Activated CD4-positive, alpha-beta T cell treated with anti-CD3 and anti-CD28 coated beads, Interleukin-2, amount 10 ng/mL, durations not matched to agents 24 days and 14 days (primary cell): ENCODE measurements at regions of chr19 and their contacts with region 1.

Region 1: DNA sequence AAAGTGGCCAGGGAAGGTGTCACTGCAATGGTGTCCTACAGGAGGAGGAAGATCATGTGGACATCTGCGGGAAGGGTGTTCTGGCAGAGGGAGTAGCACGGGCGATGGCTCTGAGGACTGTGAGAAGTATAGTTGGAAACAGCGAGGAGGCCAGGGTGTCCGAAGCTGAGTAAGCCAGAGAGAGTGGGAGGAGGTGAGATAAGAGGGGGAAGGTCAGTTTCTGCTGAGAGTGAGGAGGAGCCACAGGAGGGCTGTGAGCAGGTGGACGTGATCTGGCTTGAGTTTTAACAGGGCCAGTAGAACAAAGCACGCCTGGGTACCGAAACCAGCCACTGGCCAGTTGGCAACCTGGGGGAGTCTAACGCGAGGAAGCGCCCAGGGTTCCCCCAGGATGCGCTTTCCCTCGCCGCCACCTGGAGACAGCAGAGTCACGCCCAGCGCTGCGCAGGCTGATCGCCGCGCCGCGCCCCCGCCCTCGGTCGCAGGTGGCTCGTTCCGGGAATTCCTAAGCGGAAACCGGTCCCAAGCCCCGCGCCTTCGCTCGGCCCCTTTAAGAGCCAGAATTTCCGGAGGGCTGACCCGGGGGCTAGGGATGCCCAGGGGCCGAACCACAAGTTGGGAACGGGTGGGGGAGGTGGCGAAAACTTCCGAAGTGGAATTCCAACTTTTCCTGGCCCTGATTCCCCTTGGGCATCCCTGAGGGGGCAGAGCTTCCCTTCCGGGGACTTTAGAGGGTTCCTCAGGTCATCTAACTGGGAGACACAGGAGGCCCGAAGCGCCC is 1.1 kb upstream of the LSR start:
- DNase-seq: peak; percentile 82
- H3K4me3 Mint-ChIP-seq: peak overlapping the region; percentile 79
- H3K27ac Mint-ChIP-seq: no peak overlapping the region
- H3K4me1 Mint-ChIP-seq: peaks cover 19% of the 10 kb centered on the region
- H3K27me3 Mint-ChIP-seq: peaks cover 56% of the 10 kb centered on the region

Region 2: DNA sequence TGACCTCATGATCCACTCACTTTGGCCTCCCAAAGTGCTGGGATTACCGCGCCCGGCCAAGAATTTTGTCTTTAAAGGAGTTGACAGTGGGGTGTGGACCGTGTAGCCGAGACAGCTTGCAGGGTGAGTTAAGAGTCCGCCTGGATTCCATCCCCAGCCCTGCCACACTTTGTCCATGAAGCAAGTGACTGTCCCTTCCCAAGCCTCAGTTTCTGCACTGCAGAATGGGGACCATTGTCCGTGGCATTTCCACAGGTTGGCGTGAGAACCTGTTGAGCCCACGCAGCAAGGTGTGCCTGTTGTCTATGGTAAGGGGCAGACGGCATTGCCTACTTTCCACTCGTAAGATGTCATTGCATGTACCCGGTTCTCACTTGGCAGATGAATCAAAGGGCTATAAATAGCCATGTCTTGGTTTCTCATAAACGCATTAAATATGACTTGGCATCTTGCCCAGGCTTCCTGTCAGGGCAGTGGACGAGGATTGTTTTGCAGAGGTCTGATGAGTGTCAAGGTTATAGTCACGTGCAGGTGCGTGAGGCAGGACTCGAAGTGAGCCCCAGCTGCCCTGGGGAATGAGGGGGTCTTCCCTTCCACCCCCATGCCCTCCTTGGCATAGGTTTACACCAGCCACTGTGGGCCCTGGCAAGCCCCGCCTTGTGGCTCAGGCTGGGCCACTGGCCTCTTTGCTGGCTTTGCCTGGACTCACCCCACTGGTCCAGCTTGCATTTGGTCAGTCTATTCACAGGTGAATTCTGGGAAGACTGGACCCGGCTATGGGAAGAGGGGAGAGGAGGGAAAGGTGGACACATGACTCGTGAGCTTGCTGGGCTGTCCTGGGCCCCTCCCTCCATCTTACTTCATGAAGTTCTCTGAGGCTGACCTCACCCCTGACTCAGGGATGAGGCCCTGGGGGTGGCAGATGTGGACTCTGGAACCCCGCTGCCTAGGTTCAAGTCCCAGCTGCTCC is 33.8 kb before region 1 on chr19:
- intact Hi-C with region 1: loop called (anchors 5 kb)
- DNase-seq: peak; percentile 88
- H3K4me3 Mint-ChIP-seq: peak overlapping the region; percentile 19
- H3K27ac Mint-ChIP-seq: peak overlapping the region; percentile 84
- H3K4me1 Mint-ChIP-seq: peaks cover 56% of the 10 kb centered on the region
- H3K27me3 Mint-ChIP-seq: no peaks in the 10 kb centered on the region